KBM-7 (cell line): ENCODE measurements at regions of chr17 and their contacts with region 1.

Region 1: DNA sequence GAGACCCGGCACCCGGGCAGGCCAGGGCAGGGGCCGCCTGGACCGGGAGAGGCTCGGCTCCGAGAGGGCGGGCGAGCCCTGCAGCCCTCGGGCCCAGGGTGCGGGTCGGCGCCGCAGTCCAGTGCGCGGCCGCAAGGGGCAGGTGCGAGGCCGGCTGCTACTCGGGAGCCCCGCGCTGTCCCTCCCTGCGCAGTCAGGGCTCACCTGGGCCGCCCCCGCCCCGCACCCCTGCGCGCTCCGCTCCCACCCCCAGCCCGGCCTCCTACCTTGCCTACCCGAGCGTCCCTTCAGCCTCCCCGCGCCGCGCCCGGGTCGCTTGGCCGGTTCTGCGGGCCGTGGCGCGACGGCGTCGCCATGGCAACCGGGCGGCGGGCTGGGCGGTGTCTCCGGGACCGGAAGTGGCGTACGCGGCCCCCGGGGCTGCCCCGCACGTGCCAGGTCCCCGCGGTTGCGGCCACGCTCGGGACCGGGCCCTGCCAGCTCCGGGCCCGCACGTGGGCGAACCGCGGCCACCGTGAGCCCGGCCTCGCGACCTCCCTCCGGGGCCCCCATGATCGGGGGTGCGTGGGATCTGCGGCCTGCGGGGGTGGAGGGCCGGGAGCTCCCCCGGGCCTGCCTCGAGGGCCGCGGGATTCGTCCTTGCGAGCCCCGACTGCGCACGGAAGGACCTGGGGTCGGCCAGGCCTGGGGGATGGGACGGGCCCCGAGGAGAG is at the start of gene CYB561:
- DNase-seq: peak; percentile 59

Region 2: GRCh38 chr17:63621766-63622519 is 175.8 kb after region 1 on chr17 and contains the start of gene MAP3K3:
- in situ Hi-C with region 1: loop called (anchors 25 kb)
- DNase-seq: peak; percentile 100